IMR-90 (cell line): ENCODE measurements at regions of chr6 and their contacts with region 1.

Region 1: GRCh38 chr6:140758169-140758877 is 1374.4 kb upstream of the GJE1 start:
- DNase-seq: no peak
- ATAC-seq: no peak
- H3K4me3 ChIP-seq: no peak overlapping the region
- H3K27ac ChIP-seq: no peak overlapping the region
- H3K4me1 ChIP-seq: no peaks in the 10 kb centered on the region
- H3K27me3 ChIP-seq: no peaks in the 10 kb centered on the region
- CTCF ChIP-seq: no peak
- POLR2A ChIP-seq: no peak
- RAD21 ChIP-seq: no peak

Region 2: GRCh38 chr6:140671926-140672325 is 86.4 kb before region 1 on chr6:
- CTCF ChIA-PET with region 1: no interaction called
- POLR2A ChIA-PET with region 1: no interaction called
- dilution Hi-C with region 1: no loop called
- in situ Hi-C with region 1: no loop called
- intact Hi-C with region 1: no loop called
- DNase-seq: no peak
- ATAC-seq: no peak
- H3K4me3 ChIP-seq: no peak overlapping the region
- H3K27ac ChIP-seq: no peak overlapping the region
- H3K4me1 ChIP-seq: no peaks in the 10 kb centered on the region; the same call in 1 of the 2 replicates
- H3K27me3 ChIP-seq: no peaks in the 10 kb centered on the region
- CTCF ChIP-seq: no peak
- POLR2A ChIP-seq: no peak
- RAD21 ChIP-seq: no peak

Region 3: GRCh38 chr6:140816681-140817080 is 58.4 kb after region 1 on chr6:
- CTCF ChIA-PET with region 1: no interaction called
- POLR2A ChIA-PET with region 1: no interaction called
- dilution Hi-C with region 1: no loop called
- in situ Hi-C with region 1: no loop called
- intact Hi-C with region 1: loop called (anchors 2 kb)
- DNase-seq: no peak
- ATAC-seq: no peak
- H3K4me3 ChIP-seq: no peak overlapping the region
- H3K27ac ChIP-seq: no peak overlapping the region
- H3K4me1 ChIP-seq: no peaks in the 10 kb centered on the region
- H3K27me3 ChIP-seq: no peaks in the 10 kb centered on the region
- CTCF ChIP-seq: no peak
- POLR2A ChIP-seq: no peak
- RAD21 ChIP-seq: no peak

Region 4: GRCh38 chr6:141265756-141266623 is 507.7 kb after region 1 on chr6:
- CTCF ChIA-PET with region 1: no interaction called
- POLR2A ChIA-PET with region 1: no interaction called
- dilution Hi-C with region 1: no loop called
- in situ Hi-C with region 1: no loop called
- intact Hi-C with region 1: no loop called
- DNase-seq: no peak
- ATAC-seq: no peak
- H3K4me3 ChIP-seq: no peak overlapping the region; the same call in 1 of the 2 replicates
- H3K27ac ChIP-seq: no peak overlapping the region
- H3K4me1 ChIP-seq: peaks cover 2% of the 10 kb centered on the region; the same call in 1 of the 2 replicates
- H3K27me3 ChIP-seq: no peaks in the 10 kb centered on the region
- CTCF ChIP-seq: no peak
- POLR2A ChIP-seq: no peak
- RAD21 ChIP-seq: no peak